H1 (cell line): ENCODE measurements at regions of chr1 and their contacts with region 1.

Region 1: GRCh38 chr1:208132287-208132883 is 111.8 kb downstream of the PLXNA2 start:
- DNase-seq: peak; percentile 54 to 92
- H3K4me3 ChIP-seq: peak overlapping the region in 1 of 4 experiments; percentile 45; a peak in 3 of 8 replicates
- H3K27ac ChIP-seq: no peak overlapping the region
- H3K4me1 ChIP-seq: peaks cover 11 to 20% (median 15%) of the 10 kb centered on the region in 4 experiments
- H3K27me3 ChIP-seq: peaks cover 0 to 10% (median 4%) of the 10 kb centered on the region in 4 experiments; a peak in 2 of 7 replicates
- CTCF ChIP-seq: peak; percentile 85 to 90 (median 90)
- EP300 ChIP-seq: no peak
- POLR2A ChIP-seq: no peak
- RAD21 ChIP-seq: peak; percentile 63 to 69

Region 2: GRCh38 chr1:208029381-208030287 is 102.8 kb before region 1 on chr1:
- CTCF ChIA-PET with region 1: interaction called, 60 read pairs
- POLR2A ChIA-PET with region 1: no interaction called
- DNase-seq: no peak
- H3K4me3 ChIP-seq: no peak overlapping the region
- H3K27ac ChIP-seq: no peak overlapping the region
- H3K4me1 ChIP-seq: no peaks in the 10 kb centered on the region
- H3K27me3 ChIP-seq: no peaks in the 10 kb centered on the region
- CTCF ChIP-seq: no peak
- EP300 ChIP-seq: no peak
- POLR2A ChIP-seq: no peak
- RAD21 ChIP-seq: no peak

Region 3: GRCh38 chr1:208101661-208102431 is 30.5 kb before region 1 on chr1:
- CTCF ChIA-PET with region 1: interaction called, 19 read pairs
- POLR2A ChIA-PET with region 1: no interaction called
- DNase-seq: no peak
- H3K4me3 ChIP-seq: no peak overlapping the region
- H3K27ac ChIP-seq: no peak overlapping the region
- H3K4me1 ChIP-seq: peaks cover 0 to 13% (median 4%) of the 10 kb centered on the region in 4 experiments; a peak in 5 of 7 replicates
- H3K27me3 ChIP-seq: no peaks in the 10 kb centered on the region
- CTCF ChIP-seq: no peak
- EP300 ChIP-seq: no peak
- POLR2A ChIP-seq: no peak
- RAD21 ChIP-seq: no peak

Region 4: GRCh38 chr1:208149776-208150514 is 17.6 kb after region 1 on chr1:
- CTCF ChIA-PET with region 1: interaction called, 82 read pairs
- POLR2A ChIA-PET with region 1: interaction called, 4 read pairs
- DNase-seq: no peak
- H3K4me3 ChIP-seq: no peak overlapping the region
- H3K27ac ChIP-seq: no peak overlapping the region
- H3K4me1 ChIP-seq: peaks cover 0 to 15% (median 5%) of the 10 kb centered on the region in 4 experiments; a peak in 4 of 7 replicates
- H3K27me3 ChIP-seq: no peaks in the 10 kb centered on the region
- CTCF ChIP-seq: no peak
- EP300 ChIP-seq: no peak
- POLR2A ChIP-seq: no peak
- RAD21 ChIP-seq: no peak

Region 5: GRCh38 chr1:208189183-208189582 is 56.8 kb after region 1 on chr1:
- CTCF ChIA-PET with region 1: interaction called, 13 read pairs
- POLR2A ChIA-PET with region 1: no interaction called
- DNase-seq: no peak
- H3K4me3 ChIP-seq: no peak overlapping the region
- H3K27ac ChIP-seq: no peak overlapping the region
- H3K4me1 ChIP-seq: no peaks in the 10 kb centered on the region
- H3K27me3 ChIP-seq: no peaks in the 10 kb centered on the region
- CTCF ChIP-seq: no peak
- EP300 ChIP-seq: no peak
- POLR2A ChIP-seq: no peak
- RAD21 ChIP-seq: no peak

Region 6: GRCh38 chr1:208238710-208239472 is 106.5 kb after region 1 on chr1:
- CTCF ChIA-PET with region 1: interaction called, 44 read pairs
- POLR2A ChIA-PET with region 1: interaction called, 4 read pairs
- DNase-seq: no peak
- H3K4me3 ChIP-seq: no peak overlapping the region; a peak in 1 of 8 replicates
- H3K27ac ChIP-seq: no peak overlapping the region
- H3K4me1 ChIP-seq: peaks cover 6 to 17% (median 11%) of the 10 kb centered on the region in 4 experiments
- H3K27me3 ChIP-seq: peaks cover 16 to 33% (median 28%) of the 10 kb centered on the region in 4 experiments
- CTCF ChIP-seq: peak; percentile 48 to 65 (median 59)
- EP300 ChIP-seq: no peak
- POLR2A ChIP-seq: no peak
- RAD21 ChIP-seq: peak; percentile 53 to 63